ENCODE measurements at regions of chr16 and their contacts with region 1.

Region 1: DNA sequence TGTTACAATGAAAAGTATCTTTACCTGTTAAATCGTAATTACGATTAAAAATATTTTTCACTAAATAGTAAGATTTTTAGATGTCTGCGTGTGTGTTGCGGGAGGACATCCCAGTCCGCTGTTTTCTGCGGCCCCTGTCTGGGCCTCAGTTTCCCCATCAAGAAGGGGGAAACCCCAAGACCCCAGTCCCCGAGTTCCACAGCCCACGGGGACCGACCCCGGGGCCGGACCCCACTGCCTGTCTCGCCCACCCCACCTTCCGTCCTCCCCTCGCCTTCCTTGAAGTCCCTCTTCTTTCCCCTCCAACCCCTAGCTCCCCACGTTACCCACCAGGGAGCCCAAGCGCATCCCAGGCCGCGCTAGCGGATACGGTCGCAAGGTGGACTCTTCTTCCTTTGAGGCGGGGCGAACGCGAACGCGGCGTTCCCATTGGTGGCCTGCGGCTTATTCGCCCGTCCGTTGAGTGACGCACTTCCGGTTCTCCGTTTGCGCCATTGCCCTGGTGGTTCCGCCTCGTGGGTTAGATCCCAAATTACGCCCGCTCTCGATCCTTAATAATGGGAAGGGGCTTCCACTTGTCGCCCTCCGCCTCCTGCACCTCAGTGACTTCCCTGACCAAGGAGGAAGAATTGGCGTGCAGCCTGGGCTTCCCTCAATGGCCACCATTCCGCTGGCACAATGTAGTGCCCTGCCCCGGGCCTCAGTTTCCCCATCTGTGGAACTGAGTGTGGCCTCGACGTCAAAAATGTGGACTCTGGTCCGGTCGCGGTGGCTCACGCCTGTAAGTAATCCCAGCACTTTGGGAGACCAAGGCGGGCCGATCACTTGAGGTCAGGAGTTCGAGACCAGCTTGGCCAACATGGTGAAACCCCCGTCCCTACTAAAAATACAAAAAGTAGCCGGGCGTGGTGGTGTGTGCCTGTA is at the start of gene NSMCE1:
- DNase-seq: peak; percentile 99
- ATAC-seq: peak; percentile 97
- H3K4me3 Mint-ChIP-seq: peak within 1 kb of the TSS; percentile 91
- H3K27ac Mint-ChIP-seq: peak within 1 kb of the TSS; percentile 99
- H3K4me1 Mint-ChIP-seq: peaks cover 71% of the 10 kb centered on the region
- H3K27me3 Mint-ChIP-seq: no peaks in the 10 kb centered on the region
- CTCF ChIP-seq: no peak
- total RNA-seq, gene NSMCE1: 150 to 156 TPM

Region 2: GRCh38 chr16:27203429-27204231 is 65.0 kb before region 1 on chr16 and contains the start of gene KDM8:
- CTCF ChIA-PET with region 1: no interaction called
- POLR2A ChIA-PET with region 1: no interaction called
- intact Hi-C with region 1: no loop called
- DNase-seq: peak; percentile 99
- ATAC-seq: peak; percentile 92
- H3K4me3 Mint-ChIP-seq: peak within 1 kb of the TSS; percentile 83
- H3K27ac Mint-ChIP-seq: peak within 1 kb of the TSS; percentile 100
- H3K4me1 Mint-ChIP-seq: peaks cover 48% of the 10 kb centered on the region
- H3K27me3 Mint-ChIP-seq: no peaks in the 10 kb centered on the region
- CTCF ChIP-seq: no peak
- total RNA-seq, gene KDM8: 10.9 to 12.7 TPM

Region 3: GRCh38 chr16:27318392-27319226 is 50.0 kb after region 1 on chr16:
- CTCF ChIA-PET with region 1: interaction called, 17 read pairs
- POLR2A ChIA-PET with region 1: interaction called, 106 read pairs
- intact Hi-C with region 1: loop called (anchors 5 kb)
- DNase-seq: peak; percentile 84
- ATAC-seq: peak; percentile 76
- H3K4me3 Mint-ChIP-seq: peak overlapping the region; percentile 89
- H3K27ac Mint-ChIP-seq: peak overlapping the region; percentile 98
- H3K4me1 Mint-ChIP-seq: peaks cover 59% of the 10 kb centered on the region
- H3K27me3 Mint-ChIP-seq: no peaks in the 10 kb centered on the region
- CTCF ChIP-seq: no peak

Region 4: DNA sequence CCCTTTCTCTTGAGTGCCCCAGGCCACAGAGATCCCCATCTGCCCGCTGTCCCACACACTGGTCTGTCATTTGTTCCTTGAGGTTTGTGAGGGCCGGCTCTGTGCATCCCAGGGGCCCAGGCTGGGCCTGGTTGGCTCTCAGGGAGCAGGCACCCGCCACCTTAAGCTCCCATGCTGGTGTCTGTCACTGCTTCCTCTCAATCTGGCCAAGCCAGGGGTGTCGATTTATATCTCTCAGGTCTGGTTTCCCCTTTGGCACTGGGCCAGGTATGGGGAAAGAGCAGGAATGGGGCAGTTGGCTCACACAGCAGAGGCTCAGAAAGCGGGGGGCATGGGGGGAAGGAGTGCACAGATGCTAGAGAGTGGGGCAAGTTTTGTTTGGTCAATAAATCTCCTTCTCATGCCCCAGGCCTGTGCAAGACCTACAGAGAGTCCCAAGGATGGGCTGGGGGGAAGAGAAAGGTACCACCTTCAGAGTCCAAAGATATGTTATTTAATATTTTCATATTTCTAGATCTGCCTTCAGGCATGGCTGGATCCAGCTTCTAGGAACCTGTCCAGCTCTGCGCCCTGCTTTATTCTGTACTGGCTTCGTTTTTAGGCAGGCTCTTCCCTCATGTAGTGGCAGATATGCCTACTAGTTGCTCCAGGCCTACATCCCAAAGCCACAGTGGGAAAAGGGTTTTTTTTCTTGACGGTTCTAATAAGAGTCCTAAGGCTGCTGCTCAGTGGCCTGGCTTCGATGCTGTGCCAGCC is 79.5 kb after region 1 on chr16:
- CTCF ChIA-PET with region 1: no interaction called
- POLR2A ChIA-PET with region 1: no interaction called
- intact Hi-C with region 1: no loop called
- DNase-seq: no peak
- ATAC-seq: no peak
- H3K4me3 Mint-ChIP-seq: no peak overlapping the region
- H3K27ac Mint-ChIP-seq: no peak overlapping the region
- H3K4me1 Mint-ChIP-seq: peaks cover 16% of the 10 kb centered on the region
- H3K27me3 Mint-ChIP-seq: no peaks in the 10 kb centered on the region
- CTCF ChIP-seq: no peak

Region 5: DNA sequence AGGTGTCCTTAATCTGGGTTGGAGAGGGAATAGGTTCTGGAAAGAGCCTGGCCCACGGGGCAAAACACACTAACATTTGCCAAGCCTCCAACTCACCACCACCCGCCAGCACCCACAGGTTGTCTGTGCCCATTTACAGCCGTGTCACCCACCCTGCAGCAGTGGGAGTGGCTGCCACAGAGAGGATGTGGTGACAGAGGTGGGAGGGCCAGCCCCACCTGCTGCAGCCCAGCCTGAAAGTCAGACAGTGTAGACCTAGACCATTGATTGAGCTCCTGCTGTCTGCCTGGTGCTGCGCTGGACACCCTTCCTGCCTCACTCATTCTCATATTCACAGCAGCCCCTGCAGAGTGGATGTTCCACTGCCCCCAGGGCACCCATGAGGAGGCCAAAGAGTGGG is 178.1 kb after region 1 on chr16:
- CTCF ChIA-PET with region 1: no interaction called
- POLR2A ChIA-PET with region 1: no interaction called
- intact Hi-C with region 1: no loop called
- DNase-seq: peak; percentile 87
- ATAC-seq: peak; percentile 57
- H3K4me3 Mint-ChIP-seq: peak overlapping the region; percentile 0
- H3K27ac Mint-ChIP-seq: peak overlapping the region; percentile 97
- H3K4me1 Mint-ChIP-seq: peaks cover 87% of the 10 kb centered on the region
- H3K27me3 Mint-ChIP-seq: no peaks in the 10 kb centered on the region
- CTCF ChIP-seq: no peak

Measured in activated CD8-positive, alpha-beta T cell treated with anti-CD3 and anti-CD28 coated beads for 36 hours (primary cell).